ENCODE measurements at regions of chr11 and their contacts with region 1.

Region 1: GRCh38 chr11:115324581-115325432 is 179.4 kb downstream of the CADM1 start:
- DNase-seq: peak; percentile 68
- H3K4me3 Mint-ChIP-seq: no peak overlapping the region
- H3K27ac Mint-ChIP-seq: no peak overlapping the region
- H3K4me1 Mint-ChIP-seq: peaks cover 6% of the 10 kb centered on the region
- H3K27me3 Mint-ChIP-seq: peaks cover 36% of the 10 kb centered on the region
- CTCF ChIP-seq: peak; percentile 72

Region 2: DNA sequence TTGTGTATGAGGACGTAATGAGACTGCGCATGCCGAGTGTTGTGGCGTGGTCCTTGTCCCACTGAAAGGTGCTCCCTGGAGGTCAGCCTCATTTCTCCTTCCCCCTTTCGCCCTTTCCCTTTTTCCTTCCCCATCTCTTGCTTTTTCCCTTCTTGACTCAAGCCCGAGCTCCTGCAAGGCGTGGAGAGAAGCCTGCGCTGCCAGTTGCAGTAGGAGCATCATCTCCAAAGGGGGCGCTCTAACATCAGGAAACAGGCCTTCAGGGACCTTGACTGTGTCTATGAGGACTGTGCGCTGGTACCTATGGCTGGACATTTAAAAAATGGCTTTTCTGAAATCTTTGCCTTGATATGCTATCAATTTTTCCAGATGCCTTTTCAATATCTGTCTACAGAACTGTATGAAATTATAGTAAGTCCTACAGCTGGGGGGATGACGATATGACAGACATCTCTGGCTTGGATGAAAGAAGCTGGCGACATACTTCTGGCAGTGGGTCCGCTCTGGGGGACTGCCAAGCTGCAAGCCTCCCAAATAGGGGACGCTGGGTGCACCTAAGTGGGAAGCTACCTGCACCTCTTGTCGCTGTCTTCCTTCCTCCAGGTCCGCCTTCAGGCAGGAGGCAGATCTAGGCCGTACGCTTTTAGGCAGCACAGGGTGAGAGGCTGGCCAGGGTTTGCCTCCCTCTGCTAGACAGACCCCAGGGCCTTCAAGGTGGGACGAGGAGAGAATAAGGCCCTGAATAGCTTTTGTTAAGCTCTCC is 550.0 kb before region 1 on chr11:
- CTCF ChIA-PET with region 1: no interaction called
- POLR2A ChIA-PET with region 1: no interaction called
- intact Hi-C with region 1: loop called (anchors 5 kb)
- DNase-seq: peak; percentile 70
- H3K4me3 Mint-ChIP-seq: no peak overlapping the region
- H3K27ac Mint-ChIP-seq: no peak overlapping the region
- H3K4me1 Mint-ChIP-seq: no peaks in the 10 kb centered on the region
- H3K27me3 Mint-ChIP-seq: peaks cover 77% of the 10 kb centered on the region
- CTCF ChIP-seq: peak; percentile 68

Region 3: GRCh38 chr11:115170133-115170815 is 154.5 kb before region 1 on chr11:
- CTCF ChIA-PET with region 1: interaction called, 4 read pairs
- POLR2A ChIA-PET with region 1: no interaction called
- intact Hi-C with region 1: loop called (anchors 5 kb)
- DNase-seq: peak; percentile 50
- H3K4me3 Mint-ChIP-seq: no peak overlapping the region
- H3K27ac Mint-ChIP-seq: no peak overlapping the region
- H3K4me1 Mint-ChIP-seq: peaks cover 12% of the 10 kb centered on the region
- H3K27me3 Mint-ChIP-seq: peaks cover under 1% of the 10 kb centered on the region
- CTCF ChIP-seq: peak; percentile 63

Region 4: GRCh38 chr11:115193914-115194801 is 130.6 kb before region 1 on chr11:
- CTCF ChIA-PET with region 1: no interaction called
- POLR2A ChIA-PET with region 1: no interaction called
- intact Hi-C with region 1: no loop called
- DNase-seq: no peak
- H3K4me3 Mint-ChIP-seq: no peak overlapping the region
- H3K27ac Mint-ChIP-seq: no peak overlapping the region
- H3K4me1 Mint-ChIP-seq: peaks cover 6% of the 10 kb centered on the region
- H3K27me3 Mint-ChIP-seq: no peaks in the 10 kb centered on the region
- CTCF ChIP-seq: no peak

Region 5: GRCh38 chr11:115314330-115314920 is 10.4 kb before region 1 on chr11:
- CTCF ChIA-PET with region 1: interaction called, 12 read pairs
- POLR2A ChIA-PET with region 1: no interaction called
- intact Hi-C with region 1: no loop called
- DNase-seq: no peak
- H3K4me3 Mint-ChIP-seq: no peak overlapping the region
- H3K27ac Mint-ChIP-seq: no peak overlapping the region
- H3K4me1 Mint-ChIP-seq: peaks cover 6% of the 10 kb centered on the region
- H3K27me3 Mint-ChIP-seq: peaks cover 75% of the 10 kb centered on the region
- CTCF ChIP-seq: no peak

Region 6: GRCh38 chr11:115334932-115335788 is 10.4 kb after region 1 on chr11:
- CTCF ChIA-PET with region 1: interaction called, 10 read pairs
- POLR2A ChIA-PET with region 1: no interaction called
- intact Hi-C with region 1: no loop called
- DNase-seq: peak; percentile 31
- H3K4me3 Mint-ChIP-seq: no peak overlapping the region
- H3K27ac Mint-ChIP-seq: no peak overlapping the region
- H3K4me1 Mint-ChIP-seq: no peaks in the 10 kb centered on the region
- H3K27me3 Mint-ChIP-seq: peaks cover 35% of the 10 kb centered on the region
- CTCF ChIP-seq: peak; percentile 48

Region 7: DNA sequence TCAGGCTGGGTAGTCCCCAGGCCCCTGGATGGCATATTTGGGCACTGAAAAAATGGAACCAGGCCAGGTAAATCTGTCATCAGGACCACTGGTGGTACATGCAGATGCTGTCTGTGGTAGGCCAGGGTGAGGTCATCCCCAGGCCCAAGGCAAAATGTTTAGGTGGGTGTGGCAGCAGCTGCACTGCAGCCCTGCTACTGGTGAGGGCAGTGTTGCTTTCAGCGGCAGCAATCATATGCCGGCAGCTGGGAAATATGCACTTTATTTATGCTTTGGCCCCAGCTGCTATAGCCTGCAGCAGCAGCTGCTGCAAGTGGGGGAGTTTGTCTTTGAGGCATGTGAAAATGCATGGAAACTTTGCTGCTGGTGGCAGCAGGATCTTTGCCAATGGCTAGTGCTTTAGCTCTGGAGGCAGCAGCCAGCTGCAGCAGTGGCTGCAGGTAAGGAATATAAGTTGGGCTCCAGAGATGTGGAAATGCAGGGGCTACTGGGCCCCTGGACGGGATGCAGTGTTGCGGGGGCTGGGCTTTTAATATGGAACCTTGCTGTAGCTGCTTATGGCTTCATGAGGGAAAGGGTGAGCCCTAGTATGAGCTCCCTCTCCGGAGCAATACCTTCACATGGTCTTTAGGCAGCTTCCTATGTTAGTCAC is 545.1 kb after region 1 on chr11:
- CTCF ChIA-PET with region 1: no interaction called
- POLR2A ChIA-PET with region 1: no interaction called
- intact Hi-C with region 1: no loop called
- DNase-seq: no peak
- H3K4me3 Mint-ChIP-seq: no peak overlapping the region
- H3K27ac Mint-ChIP-seq: no peak overlapping the region
- H3K4me1 Mint-ChIP-seq: no peaks in the 10 kb centered on the region
- H3K27me3 Mint-ChIP-seq: no peaks in the 10 kb centered on the region
- CTCF ChIP-seq: peak; percentile 12

Measured in MCF 10A (cell line).